Dendritic cell treated with granulocyte-macrophage colony-stimulating factor and Interleukin-4, amounts not matched to agents 40 ng/mL and 50 ng/mL, for 4 days (primary cell): ENCODE measurements at regions of chr18 and their contacts with region 1.

Region 1: GRCh38 chr18:5600378-5601071 is 56.7 kb upstream of the EPB41L3 start:
- H3K4me3 Mint-ChIP-seq: no peak overlapping the region
- H3K27ac Mint-ChIP-seq: no peak overlapping the region
- H3K4me1 Mint-ChIP-seq: no peaks in the 10 kb centered on the region
- H3K27me3 Mint-ChIP-seq: peaks cover 25% of the 10 kb centered on the region

Region 2: DNA sequence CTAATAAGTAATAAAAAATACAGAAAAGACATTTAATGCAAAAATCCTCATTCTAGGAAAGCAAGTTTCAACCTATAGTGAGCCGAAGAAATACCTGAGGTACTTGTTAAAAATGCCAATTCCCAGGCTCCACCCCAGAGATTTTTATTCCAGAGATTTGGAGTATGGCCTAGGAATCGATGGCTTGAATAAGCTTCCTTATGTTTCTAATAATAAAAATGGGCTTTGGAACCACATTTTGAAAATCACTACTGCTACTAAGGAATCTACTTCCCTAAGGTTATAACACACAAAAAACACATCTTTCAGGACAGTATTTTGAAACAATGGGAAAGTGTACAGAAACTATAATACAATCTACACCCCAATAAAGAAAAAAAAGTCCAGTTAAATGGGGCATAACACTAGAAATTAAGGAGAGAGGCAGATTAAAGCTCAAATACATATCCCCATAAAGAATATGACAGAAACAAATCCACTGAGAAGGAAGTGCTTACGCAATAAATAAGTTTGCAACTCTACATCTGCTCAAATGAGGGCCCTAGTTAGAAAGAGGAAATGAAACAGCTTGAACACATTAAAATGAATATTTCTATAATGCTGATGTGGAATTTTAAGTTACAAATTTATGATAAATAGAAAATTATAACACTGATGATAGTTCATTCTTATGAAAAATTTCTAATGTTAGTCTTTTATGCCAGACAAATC is 160.4 kb before region 1 on chr18:
- intact Hi-C with region 1: no loop called
- H3K4me3 Mint-ChIP-seq: no peak overlapping the region
- H3K27ac Mint-ChIP-seq: peak overlapping the region; percentile 79
- H3K4me1 Mint-ChIP-seq: peaks cover 40% of the 10 kb centered on the region
- H3K27me3 Mint-ChIP-seq: no peaks in the 10 kb centered on the region

Region 3: DNA sequence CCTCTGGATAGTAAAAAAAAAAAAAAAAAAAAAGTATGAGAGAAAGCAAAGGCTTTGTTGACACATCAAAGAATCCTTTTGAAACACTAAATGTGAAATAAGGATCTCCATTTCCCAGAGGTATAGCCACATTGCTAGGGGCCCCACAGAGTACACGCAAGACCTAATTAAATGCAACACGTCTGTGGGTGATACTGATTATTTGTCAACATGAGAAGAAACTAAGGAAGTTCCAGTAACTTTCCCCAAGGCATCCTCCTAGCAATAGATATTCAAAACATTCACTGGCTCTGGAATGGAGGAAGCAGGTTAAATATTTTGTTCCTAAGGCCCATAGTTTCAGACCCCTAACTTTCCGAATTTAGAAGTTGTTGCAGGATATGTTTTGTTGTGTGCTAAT is 32.1 kb before region 1 on chr18:
- intact Hi-C with region 1: no loop called
- H3K4me3 Mint-ChIP-seq: no peak overlapping the region
- H3K27ac Mint-ChIP-seq: no peak overlapping the region
- H3K4me1 Mint-ChIP-seq: peaks cover 6% of the 10 kb centered on the region
- H3K27me3 Mint-ChIP-seq: peaks cover 21% of the 10 kb centered on the region

Region 4: GRCh38 chr18:5841518-5841917 is 241.0 kb after region 1 on chr18:
- intact Hi-C with region 1: loop called (anchors 1 kb)
- H3K4me3 Mint-ChIP-seq: no peak overlapping the region
- H3K27ac Mint-ChIP-seq: no peak overlapping the region
- H3K4me1 Mint-ChIP-seq: no peaks in the 10 kb centered on the region
- H3K27me3 Mint-ChIP-seq: peaks cover 13% of the 10 kb centered on the region

Region 5: GRCh38 chr18:5890331-5891183 is 290.0 kb after region 1 on chr18:
- intact Hi-C with region 1: loop called (anchors 1 kb)
- H3K4me3 Mint-ChIP-seq: peak overlapping the region; percentile 45
- H3K27ac Mint-ChIP-seq: no peak overlapping the region
- H3K4me1 Mint-ChIP-seq: peaks cover 10% of the 10 kb centered on the region
- H3K27me3 Mint-ChIP-seq: peaks cover 61% of the 10 kb centered on the region

Region 6: GRCh38 chr18:6521795-6522418 is 921.4 kb after region 1 on chr18:
- intact Hi-C with region 1: loop called (anchors 5 kb)
- H3K4me3 Mint-ChIP-seq: no peak overlapping the region
- H3K27ac Mint-ChIP-seq: no peak overlapping the region
- H3K4me1 Mint-ChIP-seq: no peaks in the 10 kb centered on the region
- H3K27me3 Mint-ChIP-seq: peaks cover 3% of the 10 kb centered on the region

Region 7: DNA sequence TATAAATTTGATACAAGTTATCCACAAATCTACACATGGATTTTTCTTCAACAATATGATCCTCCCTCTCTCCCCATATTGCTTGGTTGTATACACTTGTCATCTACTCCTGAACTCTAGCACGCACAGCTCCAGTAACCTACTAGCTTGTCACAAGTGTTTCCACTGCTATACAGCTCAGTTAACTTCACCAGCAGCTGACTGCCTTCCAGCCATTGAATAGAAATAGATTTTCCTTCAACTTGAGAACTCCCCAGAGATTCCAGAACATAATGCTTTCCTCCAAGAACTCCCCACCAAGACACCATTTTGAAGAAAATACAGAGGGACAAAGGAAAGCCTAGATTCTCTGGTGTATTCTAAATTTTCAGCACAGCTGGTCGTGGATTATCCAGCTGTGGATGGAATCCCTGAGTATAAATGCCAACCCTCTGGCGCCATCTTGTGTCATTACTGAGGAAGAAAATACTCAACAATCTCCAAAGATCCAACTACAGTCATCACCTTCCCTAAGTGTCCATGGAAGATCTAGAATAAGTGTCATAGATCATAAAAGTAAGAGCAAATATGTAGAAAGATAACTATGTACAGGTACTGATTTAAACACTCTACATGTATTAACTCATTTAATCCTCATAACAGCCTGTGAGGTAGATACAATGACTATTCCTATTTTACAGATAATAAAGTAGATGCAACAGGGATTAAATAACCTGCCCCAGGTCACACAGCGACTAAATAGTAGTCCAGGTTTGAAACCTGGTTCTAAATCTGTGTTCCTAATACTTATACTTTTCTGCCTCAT is 1285.7 kb after region 1 on chr18:
- intact Hi-C with region 1: loop called (anchors 5 kb)
- H3K4me3 Mint-ChIP-seq: no peak overlapping the region
- H3K27ac Mint-ChIP-seq: no peak overlapping the region
- H3K4me1 Mint-ChIP-seq: no peaks in the 10 kb centered on the region
- H3K27me3 Mint-ChIP-seq: no peaks in the 10 kb centered on the region